K562 (cell line): ENCODE measurements at regions of chr5 and their contacts with region 1.

Region 1: DNA sequence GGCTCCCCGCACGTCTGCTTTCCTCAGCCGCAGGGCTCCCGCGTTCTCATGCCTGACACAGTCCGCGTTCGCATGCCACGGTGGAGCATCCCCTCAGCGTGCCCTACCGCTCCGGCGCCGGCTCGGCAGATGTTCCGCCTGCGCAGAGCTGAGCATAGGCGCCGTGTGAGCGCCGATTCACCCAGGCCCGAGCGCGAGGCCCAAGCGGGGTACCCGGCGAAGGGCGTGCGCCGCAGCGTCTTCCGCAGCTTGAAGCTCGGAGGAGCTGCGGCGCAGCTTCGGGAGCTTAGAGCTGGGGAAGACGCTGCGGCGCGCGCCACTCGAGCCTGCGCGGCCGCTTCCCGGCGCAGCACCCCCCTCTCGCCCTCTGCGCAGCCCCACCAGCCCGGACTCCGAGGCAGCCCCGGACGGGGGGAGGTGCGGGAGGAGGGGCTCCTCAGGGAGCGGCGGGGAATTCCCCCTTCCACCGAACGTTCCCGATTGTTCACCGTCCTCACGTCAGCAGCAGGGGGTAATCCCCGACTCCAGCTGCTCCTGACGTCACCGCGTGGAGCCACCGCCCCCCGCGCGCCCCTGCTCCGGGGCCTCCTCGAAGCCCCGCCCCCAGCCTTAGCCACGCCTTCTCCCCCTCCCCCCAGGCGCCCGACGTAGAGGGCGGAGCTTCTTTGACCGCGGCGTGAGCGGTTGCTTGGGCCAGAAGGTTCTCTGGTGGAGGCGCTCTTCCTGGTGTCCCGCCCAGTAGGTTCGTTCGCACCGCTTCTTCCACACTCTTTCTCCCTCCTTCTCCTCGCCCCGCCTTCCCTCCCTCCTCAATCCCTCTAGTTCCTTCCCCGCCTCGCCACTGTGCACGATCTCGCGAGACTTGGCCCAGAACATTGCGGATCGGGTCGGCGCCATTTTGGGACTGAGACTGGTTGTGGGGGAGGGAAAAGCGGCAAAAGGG is at the start of gene GPBP1:
- DNase-seq: peak; percentile 96 to 98 (median 97)
- ATAC-seq: peak; percentile 85
- H3K4me3 ChIP-seq: peak within 1 kb of the TSS; percentile 82
- H3K27ac ChIP-seq: peak within 1 kb of the TSS; percentile 99
- H3K4me1 ChIP-seq: peaks cover 6 to 10% of the 10 kb centered on the region in 2 experiments; a peak in 4 of 5 replicates
- H3K27me3 ChIP-seq: no peaks in the 10 kb centered on the region
- CTCF ChIP-seq: peak; percentile 3 to 20 (median 8); a peak in 2 of 6 replicates
- EP300 ChIP-seq: peak; percentile 15; the same call in 1 of the 2 replicates
- POLR2A ChIP-seq: peak; percentile 90; the same call in 1 of the 2 replicates
- RAD21 ChIP-seq: no peak
- polyA plus RNA-seq, gene GPBP1: 31.0 to 40.7 TPM

Region 2: GRCh38 chr5:56310711-56311204 is 862.7 kb before region 1 on chr5:
- CTCF ChIA-PET with region 1: no interaction called
- POLR2A ChIA-PET with region 1: no interaction called
- in situ Hi-C with region 1: no loop called
- intact Hi-C with region 1: no loop called
- DNase-seq: peak; percentile 76 to 82 (median 77)
- ATAC-seq: peak; percentile 70
- H3K4me3 ChIP-seq: no peak overlapping the region
- H3K27ac ChIP-seq: no peak overlapping the region; the same call in 2 of the 3 replicates
- H3K4me1 ChIP-seq: peaks cover 5 to 27% of the 10 kb centered on the region in 2 experiments
- H3K27me3 ChIP-seq: no peaks in the 10 kb centered on the region; a peak in 1 of 5 replicates
- CTCF ChIP-seq: no peak
- EP300 ChIP-seq: peak; percentile 93
- POLR2A ChIP-seq: no peak
- RAD21 ChIP-seq: no peak

Region 3: DNA sequence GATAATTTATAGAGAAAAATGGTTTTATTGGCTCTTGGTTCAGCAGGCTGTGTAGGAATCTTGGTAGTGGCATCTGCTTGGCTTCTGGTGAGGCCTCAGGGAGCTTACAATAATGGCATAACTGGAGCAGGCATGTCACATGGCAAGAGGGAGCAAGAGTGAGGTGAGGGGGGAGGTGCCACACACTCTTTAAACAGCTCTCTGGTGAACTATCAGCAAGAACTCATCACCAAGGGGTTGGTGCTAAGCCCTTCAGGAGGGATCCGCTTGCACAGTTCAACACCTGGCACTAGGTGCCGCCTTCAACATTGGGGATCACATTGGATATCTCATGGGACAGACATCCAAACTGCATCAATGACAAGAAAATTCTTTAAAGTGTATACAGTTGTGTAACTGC is 10.9 kb after region 1 on chr5:
- CTCF ChIA-PET with region 1: no interaction called
- POLR2A ChIA-PET with region 1: interaction called, 12 read pairs
- in situ Hi-C with region 1: no loop called
- intact Hi-C with region 1: no loop called
- DNase-seq: peak; percentile 11 to 23 (median 14)
- ATAC-seq: peak; percentile 32
- H3K4me3 ChIP-seq: no peak overlapping the region
- H3K27ac ChIP-seq: no peak overlapping the region
- H3K4me1 ChIP-seq: peaks cover 16 to 21% of the 10 kb centered on the region in 2 experiments
- H3K27me3 ChIP-seq: no peaks in the 10 kb centered on the region
- CTCF ChIP-seq: no peak
- EP300 ChIP-seq: no peak
- POLR2A ChIP-seq: no peak
- RAD21 ChIP-seq: no peak

Region 4: GRCh38 chr5:57221049-57221568 is 47.7 kb after region 1 on chr5:
- CTCF ChIA-PET with region 1: no interaction called
- POLR2A ChIA-PET with region 1: no interaction called
- in situ Hi-C with region 1: no loop called
- intact Hi-C with region 1: loop called (anchors 2 kb)
- DNase-seq: peak; percentile 34 to 69 (median 43)
- ATAC-seq: peak; percentile 88
- H3K4me3 ChIP-seq: no peak overlapping the region
- H3K27ac ChIP-seq: no peak overlapping the region
- H3K4me1 ChIP-seq: no peaks in the 10 kb centered on the region
- H3K27me3 ChIP-seq: no peaks in the 10 kb centered on the region
- CTCF ChIP-seq: peak; percentile 47 to 83 (median 49); a peak in 4 of 6 replicates
- EP300 ChIP-seq: no peak
- POLR2A ChIP-seq: no peak
- RAD21 ChIP-seq: peak; percentile 88